ENCODE measurements at regions of chr1 and their contacts with region 1.

Region 1: DNA sequence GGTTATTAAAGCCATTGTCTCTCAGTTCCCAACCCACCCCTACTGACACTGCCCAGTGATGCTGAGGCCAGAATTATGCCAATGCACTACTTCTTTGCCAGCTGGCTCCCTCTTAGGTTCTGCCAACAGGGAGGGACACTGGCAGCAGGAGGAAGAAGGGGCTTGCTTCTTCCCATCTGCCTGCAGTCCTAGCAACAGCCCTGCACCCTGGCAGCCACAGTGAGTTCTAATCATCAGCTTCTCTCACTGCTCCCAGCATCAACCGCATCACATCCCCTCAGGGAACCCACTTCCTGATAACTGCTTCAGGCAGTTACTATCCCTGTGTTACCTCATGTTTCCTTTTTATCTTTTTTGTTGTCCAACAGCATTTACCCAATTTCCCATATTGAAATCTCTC is 86.2 kb downstream of the UBR4 start:
- DNase-seq: peak; percentile 40
- H3K4me3 Mint-ChIP-seq: no peak overlapping the region
- H3K27ac Mint-ChIP-seq: peak overlapping the region; percentile 80
- H3K4me1 Mint-ChIP-seq: peaks cover 29% of the 10 kb centered on the region
- H3K27me3 Mint-ChIP-seq: no peaks in the 10 kb centered on the region

Region 2: GRCh38 chr1:19156676-19157075 is 32.8 kb after region 1 on chr1:
- CTCF ChIA-PET with region 1: no interaction called
- intact Hi-C with region 1: loop called (anchors 5 kb)
- DNase-seq: no peak
- H3K4me3 Mint-ChIP-seq: no peak overlapping the region
- H3K27ac Mint-ChIP-seq: no peak overlapping the region
- H3K4me1 Mint-ChIP-seq: peaks cover 8% of the 10 kb centered on the region
- H3K27me3 Mint-ChIP-seq: no peaks in the 10 kb centered on the region

Region 3: GRCh38 chr1:19622204-19622603 is 498.4 kb after region 1 on chr1:
- CTCF ChIA-PET with region 1: no interaction called
- intact Hi-C with region 1: no loop called
- DNase-seq: no peak
- H3K4me3 Mint-ChIP-seq: no peak overlapping the region
- H3K27ac Mint-ChIP-seq: no peak overlapping the region
- H3K4me1 Mint-ChIP-seq: peaks cover 15% of the 10 kb centered on the region
- H3K27me3 Mint-ChIP-seq: no peaks in the 10 kb centered on the region

Measured in activated naive CD4-positive, alpha-beta T cell treated with anti-CD3 and anti-CD28 coated beads for 36 hours (primary cell).